PC-3 (cell line): ENCODE measurements at regions of chr2 and their contacts with region 1.

Region 1: DNA sequence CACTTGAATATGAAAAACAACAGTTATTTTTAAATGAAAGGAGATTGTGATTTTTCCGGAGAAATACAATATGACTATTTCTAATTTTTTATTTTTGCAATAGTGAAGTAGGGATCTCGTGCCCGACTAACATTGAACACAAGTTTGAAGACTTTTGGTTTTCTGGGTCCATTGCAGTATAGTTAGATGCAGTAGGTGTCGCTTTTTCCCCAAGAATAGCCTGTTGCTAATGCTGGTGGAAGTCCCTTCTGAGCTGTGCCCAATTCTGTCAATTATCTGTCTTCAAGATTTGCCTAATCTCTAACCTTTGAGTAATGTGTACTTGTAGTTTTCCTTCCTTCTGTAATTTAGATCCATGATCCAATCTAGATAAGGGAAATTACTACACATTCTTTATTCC is 36.5 kb downstream of the SEMA4F start:
- DNase-seq: peak; percentile 88
- ATAC-seq: peak; percentile 81
- H3K4me3 ChIP-seq: no peak overlapping the region
- H3K27ac ChIP-seq: no peak overlapping the region
- H3K4me1 ChIP-seq: peaks cover 41% of the 10 kb centered on the region
- H3K27me3 ChIP-seq: no peaks in the 10 kb centered on the region
- CTCF ChIP-seq: peak; percentile 95

Region 2: DNA sequence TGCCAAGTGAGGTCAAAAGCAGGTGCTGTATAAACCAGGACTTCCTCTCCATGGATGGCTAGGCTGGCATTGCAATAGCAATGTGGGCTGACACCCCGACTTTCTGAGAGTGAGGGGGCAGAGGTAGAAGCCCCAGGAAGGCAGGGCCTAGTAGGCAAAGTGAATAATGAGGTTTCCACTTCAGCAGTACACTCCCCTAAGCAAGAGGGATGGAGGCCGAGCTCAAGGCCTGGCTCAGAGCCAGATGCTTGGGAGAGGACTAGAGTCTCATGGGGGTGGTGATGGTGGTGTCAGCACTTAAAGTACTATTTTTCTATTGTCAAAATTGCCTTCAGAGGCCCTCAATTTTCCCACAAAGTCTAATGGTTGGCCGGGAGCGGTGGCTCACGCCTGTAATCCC is 101.7 kb after region 1 on chr2:
- CTCF ChIA-PET with region 1: no interaction called
- POLR2A ChIA-PET with region 1: no interaction called
- intact Hi-C with region 1: no loop called
- DNase-seq: no peak
- ATAC-seq: no peak
- H3K4me3 ChIP-seq: no peak overlapping the region
- H3K27ac ChIP-seq: no peak overlapping the region
- H3K4me1 ChIP-seq: no peaks in the 10 kb centered on the region
- H3K27me3 ChIP-seq: no peaks in the 10 kb centered on the region
- CTCF ChIP-seq: no peak

Region 3: DNA sequence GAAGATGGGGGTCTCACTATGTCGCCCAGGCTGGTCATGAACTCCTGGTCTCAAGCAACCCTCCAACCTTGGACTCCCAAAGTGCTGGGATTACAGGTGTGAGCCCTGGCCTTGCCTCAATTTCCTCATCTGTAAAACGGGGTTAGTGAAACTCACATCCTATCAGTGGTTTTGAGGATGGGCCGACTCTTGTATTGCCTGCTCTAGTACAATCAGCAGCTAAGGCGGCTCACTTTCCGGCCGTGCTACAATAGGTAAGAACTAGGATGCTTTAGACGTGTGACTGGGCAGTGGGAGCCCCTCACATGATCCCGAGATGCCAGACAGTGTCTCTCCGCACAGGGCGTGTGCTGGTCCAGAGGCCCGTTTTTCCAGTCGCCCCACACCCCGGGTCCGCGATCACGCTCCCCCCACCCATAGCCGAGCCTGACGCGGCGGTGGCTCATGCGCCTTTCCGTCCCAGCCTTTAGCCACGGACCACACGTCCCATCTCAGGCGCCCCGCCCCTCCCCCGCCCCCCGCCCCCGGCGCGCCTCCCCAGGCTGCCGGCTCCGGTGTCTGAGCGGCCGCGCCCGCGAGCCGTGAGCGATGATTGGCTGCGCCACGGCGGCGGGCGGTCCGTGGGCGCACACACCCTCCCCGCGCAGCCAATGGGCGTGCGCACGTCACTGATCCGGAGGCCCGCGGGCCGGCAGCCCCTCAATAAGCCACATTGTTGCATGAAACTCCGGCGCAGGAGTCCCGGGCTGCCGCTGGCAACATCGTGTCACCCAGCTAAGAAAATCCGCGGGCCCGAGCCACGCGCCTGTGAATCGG is 143.1 kb after region 1 on chr2 and contains the start of gene HK2:
- CTCF ChIA-PET with region 1: interaction called, 4 read pairs
- POLR2A ChIA-PET with region 1: interaction called, 5 read pairs
- intact Hi-C with region 1: loop called (anchors 2 kb)
- DNase-seq: peak; percentile 96
- ATAC-seq: peak; percentile 80
- H3K4me3 ChIP-seq: peak within 1 kb of the TSS; percentile 82
- H3K27ac ChIP-seq: peak within 1 kb of the TSS; percentile 68
- H3K4me1 ChIP-seq: peaks cover 42% of the 10 kb centered on the region
- H3K27me3 ChIP-seq: no peaks in the 10 kb centered on the region
- CTCF ChIP-seq: no peak
- total RNA-seq, gene HK2: 43.8 and 55.2 TPM in 2 replicates

Region 4: DNA sequence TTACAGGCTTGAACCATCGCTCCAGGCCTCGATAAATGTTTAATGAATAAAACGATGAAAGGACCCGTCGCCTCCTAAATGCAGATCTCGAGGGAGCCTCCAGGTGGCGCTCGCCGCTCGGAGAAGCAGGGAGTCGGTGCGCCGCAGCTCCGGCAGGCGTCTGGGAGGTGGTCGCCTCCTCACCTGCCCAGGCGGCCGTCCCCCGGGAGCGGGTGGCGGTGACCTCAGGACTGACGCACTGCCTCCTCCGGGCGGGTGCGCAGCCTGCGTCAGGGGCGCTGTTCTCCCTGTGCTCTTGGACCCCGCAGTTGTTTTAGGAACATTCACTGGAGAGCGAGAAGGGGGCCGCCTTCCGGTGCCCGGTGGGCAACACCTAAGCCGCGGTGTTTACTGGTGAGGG is 229.3 kb after region 1 on chr2:
- CTCF ChIA-PET with region 1: no interaction called
- POLR2A ChIA-PET with region 1: no interaction called
- intact Hi-C with region 1: loop called (anchors 1 kb)
- DNase-seq: peak; percentile 77
- ATAC-seq: peak; percentile 34
- H3K4me3 ChIP-seq: peak overlapping the region; percentile 73
- H3K27ac ChIP-seq: no peak overlapping the region
- H3K4me1 ChIP-seq: peaks cover 40% of the 10 kb centered on the region
- H3K27me3 ChIP-seq: no peaks in the 10 kb centered on the region
- CTCF ChIP-seq: peak; percentile 82

Region 5: GRCh38 chr2:75053484-75054112 is 363.0 kb after region 1 on chr2:
- CTCF ChIA-PET with region 1: no interaction called
- POLR2A ChIA-PET with region 1: no interaction called
- intact Hi-C with region 1: loop called (anchors 10 kb)
- DNase-seq: peak; percentile 77
- ATAC-seq: peak; percentile 100
- H3K4me3 ChIP-seq: no peak overlapping the region
- H3K27ac ChIP-seq: no peak overlapping the region
- H3K4me1 ChIP-seq: no peaks in the 10 kb centered on the region
- H3K27me3 ChIP-seq: no peaks in the 10 kb centered on the region
- CTCF ChIP-seq: peak; percentile 90

Region 6: DNA sequence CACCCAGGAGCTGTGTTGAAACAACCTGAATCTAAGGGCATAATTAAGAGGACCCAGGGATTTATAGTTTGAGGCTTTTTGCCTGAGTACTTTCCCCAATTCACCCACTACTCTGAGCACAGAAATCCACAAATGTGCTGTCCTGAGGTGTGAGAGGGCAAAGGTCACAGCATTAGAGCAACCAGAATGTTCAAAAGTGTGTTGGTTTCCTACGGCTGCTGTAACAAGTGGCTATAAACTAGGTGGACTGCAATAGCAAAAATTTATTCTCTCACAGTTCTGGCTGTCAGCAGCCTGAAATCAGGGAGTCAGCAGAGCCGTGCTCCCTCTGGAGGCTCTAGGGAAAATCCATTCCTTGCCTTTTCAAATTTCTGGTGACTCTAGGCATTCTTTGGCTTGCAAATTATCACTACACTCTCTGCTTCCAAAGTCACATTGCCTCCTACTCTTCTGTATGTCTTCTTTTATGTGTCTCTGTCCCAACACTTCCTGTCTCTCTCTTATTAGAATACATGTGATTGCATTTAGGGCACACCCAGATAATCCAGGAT is 600.1 kb after region 1 on chr2:
- CTCF ChIA-PET with region 1: no interaction called
- POLR2A ChIA-PET with region 1: no interaction called
- intact Hi-C with region 1: no loop called
- DNase-seq: no peak
- ATAC-seq: peak; percentile 46; the same call in 1 of the 2 replicates
- H3K4me3 ChIP-seq: no peak overlapping the region
- H3K27ac ChIP-seq: no peak overlapping the region
- H3K4me1 ChIP-seq: peaks cover 9% of the 10 kb centered on the region
- H3K27me3 ChIP-seq: no peaks in the 10 kb centered on the region
- CTCF ChIP-seq: peak; percentile 35; the same call in 1 of the 2 replicates